ENCODE measurements at regions of chr6 and their contacts with region 1.

Region 1: DNA sequence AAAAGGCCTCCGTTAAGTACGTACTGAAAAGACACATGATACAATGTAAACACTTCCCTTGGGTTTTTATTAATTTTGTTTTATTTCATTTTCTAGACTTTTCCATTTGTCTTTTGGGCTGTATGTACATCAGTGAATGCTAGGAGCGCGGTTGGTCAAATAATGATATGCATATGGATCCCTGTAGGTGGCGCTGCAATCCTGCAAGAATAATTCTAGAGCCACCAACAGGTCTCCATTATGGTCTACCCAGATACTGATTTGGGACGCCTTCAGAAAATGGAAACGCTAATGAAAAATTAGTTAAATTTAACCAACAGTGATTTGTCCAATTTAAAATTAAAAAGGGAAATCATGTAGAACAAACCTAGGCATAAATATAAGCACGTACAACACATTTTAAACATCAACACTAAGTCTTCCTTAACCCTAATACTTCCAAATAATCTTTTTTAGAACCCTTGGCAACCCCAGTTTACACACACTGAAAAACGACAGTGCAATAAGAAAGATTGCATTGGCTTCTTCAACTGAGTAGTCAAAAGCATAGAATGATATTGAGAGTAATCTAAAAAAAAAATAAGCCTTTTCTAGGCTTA is 433.5 kb downstream of the RFPL4B start:
- DNase-seq: peak; percentile 61
- H3K4me3 ChIP-seq: no peak overlapping the region
- H3K27ac ChIP-seq: no peak overlapping the region
- H3K4me1 ChIP-seq: no peaks in the 10 kb centered on the region
- H3K27me3 ChIP-seq: no peaks in the 10 kb centered on the region
- CTCF ChIP-seq: peak; percentile 53 to 81

Region 2: DNA sequence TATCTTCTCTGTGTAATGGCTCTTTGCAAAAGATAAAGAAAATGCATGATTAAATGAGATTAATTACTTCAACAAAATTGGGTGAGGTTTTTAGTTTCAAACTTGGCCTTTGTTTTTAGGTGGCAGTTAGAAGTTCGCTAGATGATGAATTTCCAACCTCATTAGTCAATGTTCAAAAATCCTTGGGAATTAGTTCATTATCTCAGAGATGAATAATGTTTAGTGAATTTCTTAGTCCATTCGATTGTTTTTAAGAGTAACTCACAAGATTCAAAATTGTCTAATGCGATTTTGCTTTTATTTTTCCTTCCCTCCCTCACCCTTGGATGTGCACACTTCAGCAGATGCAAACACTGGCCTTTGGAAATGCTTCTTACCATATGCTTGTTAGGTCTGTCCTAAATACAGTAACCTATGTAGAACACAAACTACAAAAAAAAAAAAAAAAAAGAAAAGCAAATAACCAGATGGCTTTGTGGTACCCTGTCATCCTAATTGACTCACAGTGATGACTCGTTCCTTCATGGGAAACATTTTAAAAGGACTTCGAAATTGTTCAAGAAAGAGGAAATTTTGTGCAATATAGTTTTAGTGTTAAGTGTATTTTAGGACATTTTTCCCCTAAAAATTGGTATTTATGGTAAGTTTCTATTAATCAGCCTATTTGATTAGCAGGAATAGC is 626.5 kb before region 1 on chr6:
- CTCF ChIA-PET with region 1: no interaction called
- dilution Hi-C with region 1: no loop called
- in situ Hi-C with region 1: no loop called
- intact Hi-C with region 1: no loop called
- DNase-seq: peak; percentile 53
- H3K4me3 ChIP-seq: no peak overlapping the region
- H3K27ac ChIP-seq: no peak overlapping the region
- H3K4me1 ChIP-seq: peaks cover 2% of the 10 kb centered on the region
- H3K27me3 ChIP-seq: peaks cover 5% of the 10 kb centered on the region
- CTCF ChIP-seq: no peak

Region 3: GRCh38 chr6:112865120-112865519 is 84.5 kb after region 1 on chr6:
- CTCF ChIA-PET with region 1: no interaction called
- dilution Hi-C with region 1: no loop called
- in situ Hi-C with region 1: no loop called
- intact Hi-C with region 1: loop called (anchors 2 kb)
- DNase-seq: no peak
- H3K4me3 ChIP-seq: no peak overlapping the region
- H3K27ac ChIP-seq: no peak overlapping the region
- H3K4me1 ChIP-seq: no peaks in the 10 kb centered on the region
- H3K27me3 ChIP-seq: peaks cover 2% of the 10 kb centered on the region
- CTCF ChIP-seq: no peak

Region 4: GRCh38 chr6:113306552-113307145 is 526.1 kb after region 1 on chr6:
- CTCF ChIA-PET with region 1: no interaction called
- dilution Hi-C with region 1: no loop called
- in situ Hi-C with region 1: no loop called
- intact Hi-C with region 1: loop called (anchors 1 kb)
- DNase-seq: peak; percentile 62
- H3K4me3 ChIP-seq: no peak overlapping the region
- H3K27ac ChIP-seq: no peak overlapping the region
- H3K4me1 ChIP-seq: no peaks in the 10 kb centered on the region
- H3K27me3 ChIP-seq: no peaks in the 10 kb centered on the region
- CTCF ChIP-seq: peak; percentile 47 to 68

Region 5: DNA sequence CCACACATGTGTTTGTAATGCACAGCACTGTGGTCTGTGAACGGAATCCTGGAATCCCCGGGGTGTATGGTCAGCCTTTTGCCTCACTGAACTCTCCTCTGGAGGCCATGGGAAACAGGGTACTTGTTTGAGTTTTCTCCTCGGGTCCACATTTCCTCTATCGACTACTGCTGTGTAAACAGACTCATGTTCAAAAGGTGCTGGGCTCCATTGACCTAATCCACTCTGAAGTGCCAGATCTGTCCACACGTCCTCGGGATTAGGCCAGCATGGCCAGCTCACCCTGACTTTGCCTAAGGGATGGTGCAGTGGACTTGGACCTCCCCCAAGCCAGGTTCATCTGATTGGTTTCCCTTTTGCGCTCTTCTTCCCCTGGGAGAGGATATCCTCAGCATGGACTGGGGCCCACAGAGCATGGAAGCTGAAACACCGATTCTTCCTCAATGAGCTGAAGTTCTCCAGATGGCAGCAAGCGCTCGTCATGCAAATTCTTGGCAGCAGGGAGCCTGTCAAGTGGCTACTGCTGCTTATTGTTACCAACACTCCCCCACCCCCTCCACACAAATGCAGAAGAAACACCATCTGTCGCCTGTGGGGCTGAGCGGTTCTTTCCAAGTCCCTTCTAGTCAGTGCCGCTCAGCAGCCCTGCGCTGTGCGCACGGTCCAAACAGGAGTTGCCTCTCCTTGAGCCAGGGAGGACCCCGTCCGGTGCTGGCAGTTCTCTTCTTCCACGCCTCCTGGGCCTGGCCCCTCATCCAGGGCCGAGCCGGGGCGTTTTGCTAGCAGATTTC is 784.0 kb after region 1 on chr6:
- CTCF ChIA-PET with region 1: no interaction called
- dilution Hi-C with region 1: no loop called
- in situ Hi-C with region 1: no loop called
- intact Hi-C with region 1: loop called (anchors 10 kb)
- DNase-seq: no peak
- H3K4me3 ChIP-seq: no peak overlapping the region
- H3K27ac ChIP-seq: no peak overlapping the region
- H3K4me1 ChIP-seq: peaks cover 21% of the 10 kb centered on the region
- H3K27me3 ChIP-seq: no peaks in the 10 kb centered on the region
- CTCF ChIP-seq: no peak

Region 6: DNA sequence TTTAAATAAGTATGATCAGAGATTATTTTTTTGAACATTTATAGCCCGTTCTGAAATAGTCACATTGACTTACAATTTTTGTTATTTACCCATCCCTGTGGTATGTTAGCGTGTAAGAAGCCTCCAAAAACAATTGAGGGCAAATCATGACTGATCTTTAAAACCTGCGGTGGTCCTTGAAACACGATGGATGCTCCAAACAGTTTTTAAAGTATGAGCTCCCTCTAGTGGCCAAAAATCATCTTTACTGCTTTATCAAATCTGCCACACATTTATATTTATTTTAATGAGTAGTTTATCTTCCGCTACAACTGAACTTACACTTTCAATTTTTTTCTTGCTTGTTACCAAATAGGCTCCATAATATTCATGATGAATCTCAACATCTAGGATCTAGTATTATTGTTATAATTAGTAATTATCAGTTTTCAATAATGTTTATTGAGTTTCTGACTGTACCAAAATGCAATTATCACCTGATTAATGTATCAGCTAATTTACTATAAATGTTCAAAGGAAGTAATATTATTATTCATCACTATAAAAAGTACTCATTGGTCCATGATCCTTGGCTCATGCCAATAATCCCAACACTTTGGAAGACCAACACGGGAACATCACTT is 1128.7 kb after region 1 on chr6:
- CTCF ChIA-PET with region 1: no interaction called
- dilution Hi-C with region 1: loop called (anchors 25 kb)
- in situ Hi-C with region 1: no loop called
- intact Hi-C with region 1: loop called (anchors 1 kb)
- DNase-seq: peak; percentile 11
- H3K4me3 ChIP-seq: no peak overlapping the region
- H3K27ac ChIP-seq: no peak overlapping the region
- H3K4me1 ChIP-seq: no peaks in the 10 kb centered on the region
- H3K27me3 ChIP-seq: no peaks in the 10 kb centered on the region
- CTCF ChIP-seq: peak; percentile 58 to 64